GM12878 (cell line): ENCODE measurements at regions of chr7 and their contacts with region 1.

Region 1: DNA sequence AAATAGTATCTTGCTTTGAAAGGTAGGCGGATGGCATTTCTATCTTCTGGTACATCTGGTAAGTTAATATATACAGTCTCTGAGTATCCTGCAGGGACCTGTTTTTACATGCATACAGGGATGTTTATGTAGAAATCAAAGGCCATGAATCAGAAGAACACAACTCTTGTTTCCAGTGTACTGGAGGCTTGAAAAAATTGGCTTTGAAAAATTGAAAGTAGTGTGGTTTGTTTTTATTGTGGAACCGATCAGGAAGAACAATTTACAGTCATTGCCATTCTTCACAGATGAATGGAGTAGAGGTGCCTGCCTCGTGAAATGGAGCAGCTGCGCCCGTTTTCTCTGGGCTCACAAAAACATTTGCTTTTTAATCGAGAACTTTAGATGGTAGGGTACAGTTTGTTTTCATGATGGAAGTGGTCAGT is 54.0 kb upstream of the RPA3 start:
- DNase-seq: no peak
- ATAC-seq: peak; percentile 77
- H3K4me3 ChIP-seq: 0 out of 2 replicates have a peak overlapping the region, but pooled peaks have one; percentile 6
- H3K27ac ChIP-seq: no peak overlapping the region
- H3K4me1 ChIP-seq: peaks cover 18% of the 10 kb centered on the region
- H3K27me3 ChIP-seq: no peaks in the 10 kb centered on the region
- CTCF ChIP-seq: no peak
- EP300 ChIP-seq: no peak
- POLR2A ChIP-seq: no peak
- RAD21 ChIP-seq: no peak

Region 2: DNA sequence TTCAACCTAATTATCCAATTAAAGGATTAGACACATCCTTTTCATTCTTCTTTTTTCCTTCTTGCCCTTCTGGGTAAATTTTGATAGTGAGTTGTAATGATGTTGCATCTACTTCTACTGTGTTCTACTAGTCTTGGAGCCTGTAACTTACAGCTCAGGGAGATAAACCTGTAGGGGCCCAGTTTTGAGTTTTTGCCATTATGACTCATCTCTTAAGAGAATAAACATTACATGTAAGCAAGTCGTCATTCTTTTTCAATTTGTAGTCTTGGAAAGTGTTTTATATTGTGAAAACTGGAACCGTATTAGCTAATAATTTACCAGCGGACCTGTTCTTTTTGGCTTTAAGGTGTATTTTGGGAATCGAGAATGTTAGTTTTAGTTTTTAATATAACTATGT is 35.7 kb after region 1 on chr7:
- CTCF ChIA-PET with region 1: interaction called, 4 read pairs
- POLR2A ChIA-PET with region 1: interaction called, 3 read pairs
- RAD21 ChIA-PET with region 1: interaction called, 22 read pairs
- SMC1A ChIA-PET with region 1: interaction called, 43 read pairs
- in situ Hi-C with region 1: no loop called
- intact Hi-C with region 1: no loop called
- DNase-seq: no peak
- ATAC-seq: peak; percentile 87
- H3K4me3 ChIP-seq: no peak overlapping the region
- H3K27ac ChIP-seq: no peak overlapping the region
- H3K4me1 ChIP-seq: peaks cover 5% of the 10 kb centered on the region
- H3K27me3 ChIP-seq: no peaks in the 10 kb centered on the region
- CTCF ChIP-seq: no peak
- EP300 ChIP-seq: 0 out of 4 replicates have a peak, but pooled peaks of 1 of the 2 experiments have one; percentile 12
- POLR2A ChIP-seq: no peak
- RAD21 ChIP-seq: no peak

Region 3: GRCh38 chr7:8149222-8149621 is 376.8 kb after region 1 on chr7:
- CTCF ChIA-PET with region 1: no interaction called
- POLR2A ChIA-PET with region 1: no interaction called
- RAD21 ChIA-PET with region 1: no interaction called
- SMC1A ChIA-PET with region 1: no interaction called
- in situ Hi-C with region 1: no loop called
- intact Hi-C with region 1: no loop called
- DNase-seq: no peak
- ATAC-seq: peak; percentile 79
- H3K4me3 ChIP-seq: no peak overlapping the region
- H3K27ac ChIP-seq: peak overlapping the region; percentile 16
- H3K4me1 ChIP-seq: peaks cover 8% of the 10 kb centered on the region; the same call in 1 of the 2 replicates
- H3K27me3 ChIP-seq: no peaks in the 10 kb centered on the region
- CTCF ChIP-seq: no peak
- EP300 ChIP-seq: no peak
- POLR2A ChIP-seq: no peak
- RAD21 ChIP-seq: no peak